ENCODE measurements at regions of chr17 and their contacts with region 1.

Region 1: DNA sequence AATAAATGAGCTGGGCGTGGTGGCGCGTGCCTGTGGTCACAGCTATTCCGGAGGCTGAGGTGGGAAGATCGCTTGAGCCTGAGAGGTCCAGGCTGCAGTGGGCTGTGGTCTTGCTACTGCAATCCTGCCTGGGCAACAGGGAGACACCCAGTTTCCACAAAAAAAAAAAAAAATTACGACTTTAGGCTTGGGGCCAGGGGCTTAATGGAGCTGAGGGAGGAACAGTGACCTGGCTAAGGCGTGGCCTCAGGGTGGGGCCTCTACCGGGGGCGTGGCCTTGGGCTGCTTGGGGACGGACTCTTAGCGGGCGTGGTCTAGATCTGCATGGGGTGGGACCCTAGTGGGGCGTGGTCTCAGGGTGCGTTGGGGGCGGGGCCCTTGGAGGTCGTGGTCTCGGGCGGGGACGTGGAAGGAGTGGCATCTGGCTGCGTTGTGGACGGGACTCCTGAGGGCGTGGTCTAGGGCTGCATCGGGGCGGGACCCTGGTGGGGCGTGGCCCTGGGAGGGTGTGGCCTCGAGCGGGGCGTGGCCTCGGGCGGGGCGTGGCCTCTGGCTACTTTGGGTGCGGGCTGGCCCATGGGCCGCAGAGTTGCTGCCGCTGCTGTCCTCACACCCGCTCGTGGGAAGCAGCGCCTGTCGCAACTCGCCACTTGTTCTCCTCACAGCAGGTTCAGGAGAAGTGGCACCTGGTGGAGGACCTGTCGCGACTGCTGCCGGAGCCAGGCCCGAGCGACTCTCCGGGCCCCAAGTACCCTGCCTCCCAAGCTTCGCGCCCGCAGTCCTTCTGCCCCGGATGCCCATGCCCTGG is 5.8 kb upstream of the C17orf99 start:
- DNase-seq: peak; percentile 100
- ATAC-seq: peak; percentile 76
- H3K4me3 ChIP-seq: peak overlapping the region; percentile 64
- H3K27ac ChIP-seq: peak overlapping the region; percentile 95
- H3K4me1 ChIP-seq: peaks cover 47% of the 10 kb centered on the region
- H3K27me3 ChIP-seq: no peaks in the 10 kb centered on the region
- CTCF ChIP-seq: no peak

Region 2: DNA sequence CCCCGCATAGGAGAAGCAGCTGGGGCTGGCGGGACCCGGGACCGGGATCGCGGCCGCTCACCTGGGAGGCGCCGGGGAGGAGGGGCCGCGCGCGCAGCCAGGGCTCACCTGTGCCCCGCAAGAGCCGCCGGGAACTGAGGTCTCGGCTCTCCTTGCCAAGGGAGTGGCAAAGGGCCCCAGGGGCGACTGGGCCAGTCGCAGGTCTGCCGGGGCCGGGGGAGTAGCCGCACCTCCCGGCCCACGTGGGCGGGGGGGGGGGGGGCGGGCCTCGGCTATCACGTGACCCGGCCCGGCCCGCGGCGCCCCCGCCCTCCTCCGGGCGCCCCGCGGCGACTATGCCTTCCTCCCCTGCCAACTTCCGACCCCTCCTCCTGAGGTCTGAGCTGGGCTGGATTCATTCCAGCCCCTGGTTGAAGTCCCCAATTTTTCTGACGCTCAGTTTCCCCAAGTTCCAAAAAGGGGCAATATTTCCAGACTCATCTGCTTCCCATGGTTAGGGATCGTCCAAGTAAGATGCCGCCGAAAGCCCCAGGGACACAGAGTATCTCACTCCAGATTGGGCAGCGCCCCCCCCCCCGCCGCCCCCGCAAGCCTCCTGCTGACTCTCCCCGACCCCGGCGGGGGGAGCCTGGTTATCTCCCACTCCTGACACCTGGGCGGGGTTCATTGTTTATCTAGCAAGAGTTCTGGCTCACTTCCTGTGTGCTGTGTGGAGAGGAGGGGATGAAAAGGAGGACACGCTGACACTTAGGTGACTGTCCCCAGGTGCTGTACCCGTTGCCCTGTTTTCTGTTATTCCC is 11.6 kb before region 1 on chr17 and contains the start of gene TMC6:
- CTCF ChIA-PET with region 1: interaction called, 4 read pairs
- POLR2A ChIA-PET with region 1: interaction called, 27 read pairs
- intact Hi-C with region 1: no loop called
- DNase-seq: peak; percentile 90
- ATAC-seq: peak; percentile 61
- H3K4me3 ChIP-seq: peak within 1 kb of the TSS; percentile 95
- H3K27ac ChIP-seq: peak within 1 kb of the TSS; percentile 79
- H3K4me1 ChIP-seq: peaks cover 27% of the 10 kb centered on the region
- H3K27me3 ChIP-seq: no peaks in the 10 kb centered on the region
- CTCF ChIP-seq: no peak
- total RNA-seq, gene TMC6: 97.3 and 138 TPM in 2 replicates

Region 3: DNA sequence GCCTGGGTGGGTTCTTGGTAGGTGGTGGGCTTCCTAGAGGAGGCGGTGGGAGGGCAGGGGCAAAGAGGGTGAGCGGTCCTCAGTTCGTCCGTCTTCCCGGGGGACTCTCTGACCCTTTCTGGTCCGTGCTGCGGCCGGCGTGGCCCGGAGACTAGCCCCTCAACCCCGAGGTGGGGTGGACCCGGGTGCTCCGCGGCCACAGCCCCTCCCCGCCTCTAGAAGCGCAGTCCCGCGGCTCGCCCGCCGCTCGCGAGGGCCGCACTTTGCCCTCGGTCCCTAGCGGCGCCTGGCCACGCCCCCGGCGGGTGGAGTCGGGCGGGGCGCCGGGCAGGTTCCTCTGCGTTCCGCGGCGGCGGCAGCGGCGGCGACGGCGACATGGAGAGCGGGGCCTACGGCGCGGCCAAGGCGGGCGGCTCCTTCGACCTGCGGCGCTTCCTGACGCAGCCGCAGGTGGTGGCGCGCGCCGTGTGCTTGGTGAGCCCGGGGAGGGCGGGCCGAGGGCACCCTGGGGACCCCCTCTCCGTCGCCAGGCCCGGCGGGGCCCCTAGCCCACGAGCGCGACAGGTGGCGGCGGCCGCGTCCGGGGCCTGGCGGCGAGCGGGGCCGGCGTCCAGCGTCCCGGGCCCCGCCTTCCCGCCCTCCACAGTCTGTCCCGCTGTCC is 28.0 kb after region 1 on chr17 and contains the start of gene SYNGR2:
- CTCF ChIA-PET with region 1: no interaction called
- POLR2A ChIA-PET with region 1: interaction called, 4 read pairs
- intact Hi-C with region 1: loop called (anchors 2 kb)
- DNase-seq: peak; percentile 94
- ATAC-seq: peak; percentile 67
- H3K4me3 ChIP-seq: peak within 1 kb of the TSS; percentile 76
- H3K27ac ChIP-seq: peak within 1 kb of the TSS; percentile 48
- H3K4me1 ChIP-seq: peaks cover 20% of the 10 kb centered on the region
- H3K27me3 ChIP-seq: no peaks in the 10 kb centered on the region
- CTCF ChIP-seq: no peak
- total RNA-seq, gene SYNGR2: 213 and 220 TPM in 2 replicates

Region 4: GRCh38 chr17:78196712-78197111 is 56.3 kb after region 1 on chr17:
- CTCF ChIA-PET with region 1: interaction called, 20 read pairs
- POLR2A ChIA-PET with region 1: no interaction called
- intact Hi-C with region 1: no loop called
- DNase-seq: no peak
- ATAC-seq: no peak
- H3K4me3 ChIP-seq: no peak overlapping the region
- H3K27ac ChIP-seq: no peak overlapping the region
- H3K4me1 ChIP-seq: peaks cover 18% of the 10 kb centered on the region
- H3K27me3 ChIP-seq: no peaks in the 10 kb centered on the region
- CTCF ChIP-seq: no peak

Region 5: GRCh38 chr17:78441271-78441986 is 301.1 kb after region 1 on chr17:
- CTCF ChIA-PET with region 1: interaction called, 21 read pairs
- POLR2A ChIA-PET with region 1: no interaction called
- intact Hi-C with region 1: no loop called
- DNase-seq: peak; percentile 38
- ATAC-seq: peak; percentile 40; the same call in 1 of the 2 replicates
- H3K4me3 ChIP-seq: no peak overlapping the region
- H3K27ac ChIP-seq: no peak overlapping the region
- H3K4me1 ChIP-seq: peaks cover 4% of the 10 kb centered on the region; the same call in 1 of the 2 replicates
- H3K27me3 ChIP-seq: no peaks in the 10 kb centered on the region
- CTCF ChIP-seq: no peak

Measured in PC-3 (cell line).